ENCODE measurements at regions of chr17 and their contacts with region 1.

Region 1: DNA sequence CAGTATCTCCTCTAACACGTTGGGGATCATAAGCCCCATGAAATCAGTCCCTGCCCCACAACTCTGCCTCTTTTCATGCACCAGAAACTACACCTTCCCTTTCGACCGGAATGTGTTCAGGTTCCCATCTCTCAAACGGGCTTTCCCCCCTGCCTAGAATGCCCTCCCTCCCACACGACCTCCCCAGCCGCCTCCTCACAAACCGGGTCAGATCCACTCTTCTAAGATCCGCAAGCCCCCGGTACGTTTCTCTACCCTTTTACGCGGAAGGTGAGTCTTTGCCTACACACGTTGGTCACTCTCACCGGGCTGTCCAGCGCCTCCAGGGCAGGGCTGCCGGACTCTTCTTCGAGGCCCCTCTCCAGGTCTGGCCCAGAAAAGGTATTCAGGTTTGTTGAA is 708 bp downstream of the DHX33 start:
- DNase-seq: no peak
- ATAC-seq: peak; percentile 25
- H3K4me3 ChIP-seq: peak overlapping the region; percentile 87
- H3K27ac ChIP-seq: peak overlapping the region; percentile 76
- H3K4me1 ChIP-seq: no peaks in the 10 kb centered on the region
- H3K27me3 ChIP-seq: no peaks in the 10 kb centered on the region
- CTCF ChIP-seq: no peak
- EP300 ChIP-seq: no peak
- POLR2A ChIP-seq: no peak
- RAD21 ChIP-seq: no peak

Region 2: GRCh38 chr17:5381542-5381941 is 86.5 kb before region 1 on chr17:
- CTCF ChIA-PET with region 1: no interaction called
- POLR2A ChIA-PET with region 1: no interaction called
- RAD21 ChIA-PET with region 1: no interaction called
- SMC1A ChIA-PET with region 1: no interaction called
- in situ Hi-C with region 1: no loop called
- intact Hi-C with region 1: no loop called
- DNase-seq: no peak
- ATAC-seq: no peak; the same call in 2 of the 3 replicates
- H3K4me3 ChIP-seq: no peak overlapping the region
- H3K27ac ChIP-seq: no peak overlapping the region
- H3K4me1 ChIP-seq: no peaks in the 10 kb centered on the region
- H3K27me3 ChIP-seq: no peaks in the 10 kb centered on the region
- CTCF ChIP-seq: no peak
- EP300 ChIP-seq: no peak
- POLR2A ChIP-seq: peak; percentile 49
- RAD21 ChIP-seq: no peak

Region 3: DNA sequence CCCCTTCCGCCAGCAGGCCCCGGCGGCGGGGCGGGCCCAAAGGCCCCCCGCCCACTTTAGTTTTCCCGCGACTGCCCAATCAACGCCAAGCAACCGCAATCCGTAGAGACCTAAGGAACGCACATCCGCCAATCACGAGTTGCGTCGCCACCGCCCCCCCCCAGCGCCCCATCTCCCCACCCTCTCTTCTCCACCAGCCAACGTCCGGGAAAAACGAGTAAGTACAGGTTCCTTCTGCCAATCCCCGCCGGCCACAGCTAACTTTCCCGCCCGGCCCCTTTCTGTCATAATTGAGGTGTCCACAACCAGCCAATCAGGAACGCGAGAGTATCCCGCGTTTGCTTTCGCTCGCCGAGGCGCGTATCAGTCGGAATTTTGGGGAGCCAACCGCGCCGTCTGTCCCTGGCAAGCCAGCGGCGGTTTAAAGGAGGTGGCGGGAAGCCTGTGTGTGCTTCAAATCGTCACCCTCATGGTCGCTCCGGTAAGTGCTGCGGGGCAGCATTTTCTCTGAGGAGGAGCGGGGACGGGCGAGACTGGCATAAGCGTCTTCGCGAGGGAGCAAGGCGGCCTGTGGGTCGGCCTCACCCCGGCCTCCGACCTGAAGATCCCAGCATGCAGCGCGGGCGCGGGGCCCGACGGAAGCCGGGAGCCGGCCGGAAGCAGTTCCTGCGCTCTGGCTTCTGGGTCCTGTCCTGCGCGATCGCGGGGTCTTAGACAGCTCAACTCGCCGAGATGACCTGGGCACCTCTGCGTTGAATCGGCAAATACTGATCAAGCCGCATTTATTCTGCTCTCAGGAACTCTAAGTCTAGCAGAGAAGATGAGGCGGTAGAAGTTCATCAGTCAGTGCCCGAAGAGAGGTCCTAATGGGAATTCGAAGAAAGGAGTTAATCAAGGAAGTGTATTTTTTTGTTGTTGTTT is 18.4 kb after region 1 on chr17 and contains the start of gene MIS12:
- CTCF ChIA-PET with region 1: interaction called, 19 read pairs
- POLR2A ChIA-PET with region 1: interaction called, 7 read pairs
- RAD21 ChIA-PET with region 1: no interaction called
- SMC1A ChIA-PET with region 1: interaction called, 10 read pairs
- in situ Hi-C with region 1: no loop called
- intact Hi-C with region 1: loop called (anchors 1 kb)
- DNase-seq: peak; percentile 94
- ATAC-seq: peak; percentile 97
- H3K4me3 ChIP-seq: peak within 1 kb of the TSS; percentile 97
- H3K27ac ChIP-seq: peak within 1 kb of the TSS; percentile 99
- H3K4me1 ChIP-seq: peaks cover 12% of the 10 kb centered on the region; the same call in 1 of the 2 replicates
- H3K27me3 ChIP-seq: no peaks in the 10 kb centered on the region
- CTCF ChIP-seq: no peak
- EP300 ChIP-seq: no peak; a peak in 1 of 4 replicates
- POLR2A ChIP-seq: peak; percentile 98
- RAD21 ChIP-seq: no peak
- polyA plus RNA-seq, gene MIS12: 19.9 to 24.0 TPM

Measured in GM12878 (cell line).